Activated CD8-positive, alpha-beta memory T cell treated with anti-CD3 and anti-CD28 coated beads, Interleukin-2, amount 10 ng/mL, durations not matched to agents 7 days and 5 days (primary cell): ENCODE measurements at regions of chr19 and their contacts with region 1.

Region 1: GRCh38 chr19:45681391-45682015 is 10.2 kb downstream of the SNRPD2 start:
- DNase-seq: peak; percentile 91
- ATAC-seq: peak; percentile 91
- H3K4me3 Mint-ChIP-seq: peak overlapping the region; percentile 76
- H3K27ac Mint-ChIP-seq: peak overlapping the region; percentile 86
- H3K4me1 Mint-ChIP-seq: peaks cover 23% of the 10 kb centered on the region
- H3K27me3 Mint-ChIP-seq: peaks cover 4% of the 10 kb centered on the region

Region 2: DNA sequence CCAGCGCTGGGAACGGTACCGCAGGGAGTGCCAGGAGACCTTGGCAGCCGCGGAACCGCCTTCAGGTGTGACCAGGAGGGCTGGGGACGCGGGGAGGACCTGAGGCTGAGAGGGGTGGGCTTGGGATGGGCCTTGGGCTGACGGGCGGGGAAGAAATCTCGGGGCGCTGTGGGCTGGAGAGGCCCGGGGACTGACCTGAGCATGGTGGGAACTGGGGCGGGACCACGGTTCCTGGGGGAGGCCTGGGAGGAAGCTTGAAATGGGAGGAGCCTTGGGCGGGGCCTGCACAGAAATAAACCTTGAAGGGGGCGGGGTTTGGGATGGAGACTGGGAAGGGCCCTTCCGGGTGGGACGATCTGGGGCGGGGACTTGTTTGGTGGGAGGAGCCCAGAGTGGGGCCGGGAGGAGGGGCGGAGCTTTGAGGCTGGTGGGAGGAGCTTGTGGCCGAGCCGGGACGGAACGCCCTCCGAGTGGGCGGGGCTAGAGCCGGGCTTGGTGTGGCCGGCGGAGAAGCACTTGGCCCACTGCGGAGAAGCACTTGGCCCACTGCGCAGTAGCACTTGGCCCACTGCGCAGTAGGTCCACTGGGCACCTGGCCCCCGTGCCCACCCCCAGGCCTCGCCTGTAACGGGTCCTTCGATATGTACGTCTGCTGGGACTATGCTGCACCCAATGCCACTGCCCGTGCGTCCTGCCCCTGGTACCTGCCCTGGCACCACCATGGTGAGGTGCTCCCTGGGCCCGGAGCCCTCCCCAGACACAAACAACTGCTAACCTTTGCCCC is 10.6 kb before region 1 on chr19:
- CTCF ChIA-PET with region 1: interaction called, 48 read pairs
- DNase-seq: peak; percentile 88
- ATAC-seq: peak; percentile 53
- H3K4me3 Mint-ChIP-seq: peak overlapping the region; percentile 56
- H3K27ac Mint-ChIP-seq: no peak overlapping the region
- H3K4me1 Mint-ChIP-seq: peaks cover 30% of the 10 kb centered on the region
- H3K27me3 Mint-ChIP-seq: peaks cover 10% of the 10 kb centered on the region